ENCODE measurements at regions of chr7 and their contacts with region 1.

Region 1: DNA sequence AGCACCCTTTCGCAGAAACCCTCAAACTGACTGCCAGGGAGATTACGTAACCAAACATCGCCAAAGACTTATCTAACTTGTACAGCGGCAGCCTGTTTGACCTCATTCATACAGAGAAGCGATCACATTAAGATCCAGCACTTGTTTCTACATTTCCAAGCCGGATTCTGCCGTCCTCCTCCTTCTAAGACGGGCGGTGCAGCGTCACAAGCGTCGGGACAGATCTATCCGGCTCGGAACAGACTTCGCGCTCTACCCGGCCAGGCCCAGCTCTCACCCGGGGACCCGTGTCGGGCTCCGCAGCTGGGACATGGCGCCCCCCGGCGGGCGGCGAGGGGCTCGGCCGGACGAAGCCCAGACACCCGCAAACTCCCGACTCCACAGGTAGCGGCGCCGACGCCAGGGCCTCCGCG is 373 bp downstream of the H2AZ2 start:
- DNase-seq: peak; percentile 88
- ATAC-seq: peak; percentile 67
- H3K4me3 Mint-ChIP-seq: peak overlapping the region; percentile 93
- H3K27ac Mint-ChIP-seq: peak overlapping the region; percentile 99
- H3K4me1 Mint-ChIP-seq: peaks cover 42% of the 10 kb centered on the region
- H3K27me3 Mint-ChIP-seq: no peaks in the 10 kb centered on the region

Region 2: DNA sequence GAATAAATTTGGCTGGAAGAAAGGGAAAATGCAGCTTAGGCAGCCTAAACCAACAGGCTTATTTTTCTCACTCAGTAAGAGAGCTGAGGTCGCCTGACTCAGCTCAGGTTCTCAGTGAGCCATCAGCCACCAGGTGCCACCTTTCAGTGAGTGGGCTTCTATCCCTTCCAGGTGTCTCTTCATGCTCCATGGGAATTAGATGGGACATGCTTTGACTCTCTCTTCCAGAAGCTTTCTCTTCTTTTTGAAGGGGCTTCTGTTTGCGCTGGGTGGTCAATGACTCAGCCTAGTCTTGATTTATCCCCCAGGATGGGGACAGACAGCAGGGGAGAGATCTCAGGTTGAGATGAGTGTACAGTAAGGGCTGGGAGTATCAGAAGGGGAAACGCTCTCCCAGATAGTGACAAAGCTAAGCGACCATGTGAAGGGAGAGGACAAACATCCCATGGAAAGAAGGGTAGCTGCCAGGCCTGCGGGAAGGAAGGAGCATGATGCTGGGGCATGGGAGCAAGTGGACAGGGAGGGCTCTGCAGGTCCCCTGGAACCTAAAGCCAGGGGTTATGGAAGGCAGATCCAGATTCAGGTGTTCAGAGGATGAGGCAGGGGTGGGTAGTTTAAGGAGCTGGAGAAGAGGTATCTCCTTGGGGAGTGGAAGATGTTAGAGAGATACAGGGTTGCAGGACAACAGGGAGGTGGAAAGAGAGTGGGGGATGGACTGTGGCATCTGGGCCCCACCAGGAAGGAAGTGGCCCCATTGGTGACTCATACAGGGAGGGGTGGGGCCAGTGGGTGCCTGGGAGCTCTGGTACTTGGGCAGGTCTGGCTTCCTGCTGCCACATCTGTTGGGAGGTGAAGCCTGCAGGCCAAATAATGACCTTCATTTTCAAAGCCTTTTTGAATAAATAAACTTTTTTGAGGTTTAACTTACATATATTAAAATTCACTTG is 208.6 kb before region 1 on chr7:
- CTCF ChIA-PET with region 1: no interaction called
- POLR2A ChIA-PET with region 1: interaction called, 26 read pairs
- DNase-seq: peak; percentile 92
- ATAC-seq: peak; percentile 87
- H3K4me3 Mint-ChIP-seq: peak overlapping the region; percentile 77
- H3K27ac Mint-ChIP-seq: peak overlapping the region; percentile 100
- H3K4me1 Mint-ChIP-seq: peaks cover 79% of the 10 kb centered on the region
- H3K27me3 Mint-ChIP-seq: no peaks in the 10 kb centered on the region

Region 3: DNA sequence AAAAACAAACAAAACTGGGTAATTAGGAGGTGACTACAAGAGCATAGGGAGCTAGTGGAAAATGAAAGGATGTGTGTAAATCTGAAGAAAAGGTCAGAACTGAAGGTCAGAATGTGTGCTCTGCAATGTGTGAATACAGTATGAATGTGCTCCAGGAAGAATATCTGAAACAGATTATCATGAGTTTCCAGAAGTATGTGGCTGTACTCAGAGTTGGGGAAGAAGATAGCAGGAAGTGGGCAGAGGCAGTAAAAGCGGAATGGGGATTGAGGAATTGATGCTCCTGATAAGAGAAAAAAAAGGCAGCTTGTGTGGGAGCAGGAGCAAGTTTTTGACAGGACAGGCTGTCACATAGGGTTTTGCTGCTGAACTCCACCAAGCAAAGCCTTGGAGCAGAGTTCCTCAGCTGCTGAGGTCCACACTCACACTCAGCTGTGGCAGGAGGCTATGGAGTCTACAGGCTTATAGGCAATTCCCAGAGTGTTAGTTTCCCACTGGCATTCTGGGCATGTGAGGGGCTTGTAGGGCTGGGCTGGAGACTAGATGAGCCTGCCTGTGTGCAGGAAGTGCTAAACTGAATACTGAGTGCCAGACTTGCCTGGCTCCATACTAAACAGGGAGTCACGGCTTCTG is 22.5 kb before region 1 on chr7:
- CTCF ChIA-PET with region 1: interaction called, 3 read pairs
- POLR2A ChIA-PET with region 1: interaction called, 22 read pairs
- DNase-seq: no peak
- ATAC-seq: no peak
- H3K4me3 Mint-ChIP-seq: no peak overlapping the region
- H3K27ac Mint-ChIP-seq: peak overlapping the region; percentile 17
- H3K4me1 Mint-ChIP-seq: peaks cover 1% of the 10 kb centered on the region
- H3K27me3 Mint-ChIP-seq: no peaks in the 10 kb centered on the region

Region 4: DNA sequence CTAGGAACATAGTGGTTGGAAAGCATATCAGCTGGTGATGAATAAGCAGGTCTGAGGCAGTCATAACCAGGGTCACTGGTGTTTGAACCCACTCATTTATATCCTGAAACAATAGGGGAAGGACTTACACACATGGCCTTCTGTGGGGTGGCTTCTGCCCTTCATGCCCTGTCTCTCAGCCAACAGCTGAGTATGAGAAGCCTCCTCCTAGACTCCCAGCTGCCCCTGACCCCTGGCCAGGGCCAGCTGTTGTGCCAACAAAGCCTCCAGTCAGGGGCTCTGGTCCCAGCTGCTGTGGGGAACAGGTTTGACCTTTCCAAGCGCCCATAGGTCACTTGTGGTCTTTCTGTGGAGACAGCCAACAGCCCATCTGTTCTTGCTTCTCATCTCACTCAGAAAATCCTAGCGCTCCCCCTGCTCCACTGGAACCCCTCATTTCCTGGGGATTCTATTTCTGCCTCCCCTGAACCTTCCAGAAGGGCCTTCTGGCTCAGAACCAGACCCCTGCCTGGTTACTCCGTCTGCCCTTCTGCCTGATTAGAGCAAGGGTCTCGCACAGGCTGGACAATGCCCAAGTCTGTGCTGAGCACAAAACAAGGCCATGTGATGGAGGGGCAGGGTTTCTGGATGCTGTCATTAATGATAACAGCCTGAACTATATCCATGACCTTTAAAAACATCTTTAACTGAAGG is 47.5 kb after region 1 on chr7:
- CTCF ChIA-PET with region 1: interaction called, 11 read pairs
- POLR2A ChIA-PET with region 1: interaction called, 9 read pairs
- DNase-seq: no peak
- ATAC-seq: no peak
- H3K4me3 Mint-ChIP-seq: no peak overlapping the region
- H3K27ac Mint-ChIP-seq: no peak overlapping the region
- H3K4me1 Mint-ChIP-seq: peaks cover 27% of the 10 kb centered on the region
- H3K27me3 Mint-ChIP-seq: no peaks in the 10 kb centered on the region

Region 5: GRCh38 chr7:44980393-44981034 is 133.0 kb after region 1 on chr7:
- CTCF ChIA-PET with region 1: no interaction called
- POLR2A ChIA-PET with region 1: interaction called, 17 read pairs
- DNase-seq: peak; percentile 76
- ATAC-seq: peak; percentile 11
- H3K4me3 Mint-ChIP-seq: peak overlapping the region; percentile 95
- H3K27ac Mint-ChIP-seq: peak overlapping the region; percentile 98
- H3K4me1 Mint-ChIP-seq: peaks cover 75% of the 10 kb centered on the region
- H3K27me3 Mint-ChIP-seq: no peaks in the 10 kb centered on the region